Activated T-helper 1 cell treated with anti-CD3 and anti-CD28 coated beads, Interleukin-12 subunit alpha, Interleukin-12 subunit beta, Interleukin-2, Interleukin-4 antibody, amounts not matched to agents 30 ng/mL and 10 ng/mL and 1 ng/mL, durations not matched to agents 14 hours and 24 hours and 36 hours (primary cell): ENCODE measurements at regions of chr1 and their contacts with region 1.

Region 1: GRCh38 chr1:225474986-225475820 is 47.4 kb upstream of the LBR start:
- DNase-seq: peak; percentile 69
- H3K4me3 Mint-ChIP-seq: no peak overlapping the region
- H3K27ac Mint-ChIP-seq: no peak overlapping the region
- H3K4me1 Mint-ChIP-seq: peaks cover 41% of the 10 kb centered on the region
- H3K27me3 Mint-ChIP-seq: peaks cover 2% of the 10 kb centered on the region

Region 2: DNA sequence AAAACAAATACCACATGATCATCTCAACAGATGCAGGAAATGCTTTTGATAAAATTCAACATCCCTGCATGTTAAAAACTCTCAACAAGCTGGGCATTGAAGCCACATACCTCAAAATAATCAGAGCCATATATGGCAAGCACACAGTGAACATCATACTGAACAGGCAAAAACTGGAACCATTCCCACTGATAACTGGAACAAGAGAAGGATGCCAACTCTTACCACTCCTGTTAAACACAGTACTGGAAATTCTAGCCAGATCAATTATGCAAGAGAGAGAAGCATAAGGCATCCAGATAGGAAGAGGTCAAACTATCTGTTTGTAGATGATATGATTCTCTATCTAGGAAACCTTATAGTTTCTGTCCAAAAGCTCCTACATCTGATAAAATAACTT is 454.2 kb before region 1 on chr1:
- intact Hi-C with region 1: no loop called
- DNase-seq: no peak
- H3K4me3 Mint-ChIP-seq: no peak overlapping the region
- H3K27ac Mint-ChIP-seq: no peak overlapping the region
- H3K4me1 Mint-ChIP-seq: no peaks in the 10 kb centered on the region
- H3K27me3 Mint-ChIP-seq: no peaks in the 10 kb centered on the region

Region 3: DNA sequence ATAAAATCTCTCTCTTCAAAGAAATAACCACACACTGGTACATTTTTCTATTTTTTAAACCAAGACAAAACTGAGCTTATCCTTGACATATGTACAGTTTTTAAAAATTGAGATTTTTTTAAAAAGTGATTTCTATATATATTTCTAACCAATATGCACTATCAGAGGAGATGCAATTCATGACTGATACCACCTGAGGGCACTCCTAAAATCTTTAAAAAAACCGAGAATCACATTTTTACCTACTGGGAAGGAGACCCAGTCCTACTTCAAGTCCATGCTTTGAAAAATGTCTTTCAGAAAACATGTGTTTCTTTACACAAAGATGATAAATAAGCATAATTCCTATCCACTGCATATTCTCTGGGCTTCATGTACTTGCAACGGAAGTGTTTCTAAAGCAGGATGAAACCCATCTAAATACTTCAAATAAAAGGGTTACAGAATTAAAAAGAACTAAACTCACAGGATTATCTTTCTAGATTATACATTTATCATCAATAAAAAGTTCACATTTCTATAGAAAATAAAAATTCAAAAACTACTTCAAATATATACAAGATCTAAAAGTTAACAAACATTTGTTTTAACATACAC is 79.1 kb after region 1 on chr1:
- intact Hi-C with region 1: loop called (anchors 1 kb)
- DNase-seq: no peak
- H3K4me3 Mint-ChIP-seq: no peak overlapping the region
- H3K27ac Mint-ChIP-seq: no peak overlapping the region
- H3K4me1 Mint-ChIP-seq: no peaks in the 10 kb centered on the region
- H3K27me3 Mint-ChIP-seq: peaks cover 8% of the 10 kb centered on the region

Region 4: GRCh38 chr1:225772323-225772768 is 297.1 kb after region 1 on chr1:
- intact Hi-C with region 1: loop called (anchors 1 kb)
- DNase-seq: no peak
- H3K4me3 Mint-ChIP-seq: no peak overlapping the region
- H3K27ac Mint-ChIP-seq: no peak overlapping the region
- H3K4me1 Mint-ChIP-seq: peaks cover 5% of the 10 kb centered on the region
- H3K27me3 Mint-ChIP-seq: peaks cover 2% of the 10 kb centered on the region

Region 5: GRCh38 chr1:225911191-225912130 is 436.3 kb after region 1 on chr1:
- intact Hi-C with region 1: loop called (anchors 1 kb)
- DNase-seq: peak; percentile 59
- H3K4me3 Mint-ChIP-seq: no peak overlapping the region
- H3K27ac Mint-ChIP-seq: no peak overlapping the region
- H3K4me1 Mint-ChIP-seq: peaks cover 16% of the 10 kb centered on the region
- H3K27me3 Mint-ChIP-seq: peaks cover 2% of the 10 kb centered on the region

Region 6: GRCh38 chr1:225977937-225978748 is 502.9 kb after region 1 on chr1:
- intact Hi-C with region 1: loop called (anchors 1 kb)
- DNase-seq: no peak
- H3K4me3 Mint-ChIP-seq: no peak overlapping the region
- H3K27ac Mint-ChIP-seq: peak overlapping the region; percentile 11
- H3K4me1 Mint-ChIP-seq: peaks cover 21% of the 10 kb centered on the region
- H3K27me3 Mint-ChIP-seq: no peaks in the 10 kb centered on the region

Region 7: GRCh38 chr1:226195144-226195543 is 719.9 kb after region 1 on chr1:
- intact Hi-C with region 1: loop called (anchors 5 kb)
- DNase-seq: no peak
- H3K4me3 Mint-ChIP-seq: no peak overlapping the region
- H3K27ac Mint-ChIP-seq: no peak overlapping the region
- H3K4me1 Mint-ChIP-seq: no peaks in the 10 kb centered on the region
- H3K27me3 Mint-ChIP-seq: peaks cover 5% of the 10 kb centered on the region